MCF 10A (cell line): ENCODE measurements at regions of chr17 and their contacts with region 1.

Region 1: DNA sequence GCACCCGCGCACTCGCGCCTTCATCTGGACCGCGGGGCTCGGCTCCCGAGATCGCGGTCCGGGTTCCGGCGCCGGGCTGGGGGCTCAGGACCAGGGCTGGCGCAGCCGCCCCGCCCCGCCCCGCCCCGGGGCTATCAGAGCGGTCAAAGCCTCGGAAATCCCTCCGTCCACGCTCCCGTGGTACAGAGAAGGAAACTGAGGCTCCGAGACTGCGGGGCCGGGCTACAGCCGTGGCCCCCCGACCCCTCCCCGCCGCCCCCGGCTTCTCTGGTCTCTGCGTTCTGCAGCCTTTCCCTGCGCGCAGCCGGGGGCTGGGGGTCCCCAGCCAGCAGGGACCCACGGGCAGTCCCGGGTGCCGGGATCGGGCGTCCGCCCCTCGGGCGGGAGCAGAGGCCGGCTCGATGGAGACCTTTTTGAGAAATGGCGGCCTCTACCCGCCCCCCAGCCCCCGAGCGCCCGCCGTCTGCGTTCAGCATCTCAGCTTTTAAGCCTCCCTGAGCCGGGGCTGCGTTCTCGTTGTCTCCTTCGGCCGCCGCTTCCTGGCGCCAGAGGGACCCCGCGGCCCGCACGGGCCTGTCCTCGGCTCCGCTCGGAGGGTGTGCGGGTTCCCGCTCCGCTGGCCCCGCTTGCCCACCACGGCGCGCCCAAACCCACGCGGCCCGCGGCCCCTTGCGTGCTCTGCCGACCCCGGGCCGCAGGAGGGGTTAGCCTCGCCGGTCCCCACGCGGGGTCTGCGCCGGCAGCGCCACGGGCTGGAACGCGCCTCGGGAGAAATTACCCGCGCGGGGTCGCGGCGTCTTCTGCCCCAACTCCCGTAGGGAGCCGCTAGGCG is 1.5 kb upstream of the NPTX1 start:
- DNase-seq: no peak
- H3K4me3 Mint-ChIP-seq: no peak overlapping the region
- H3K27ac Mint-ChIP-seq: no peak overlapping the region
- H3K4me1 Mint-ChIP-seq: peaks cover 9% of the 10 kb centered on the region
- H3K27me3 Mint-ChIP-seq: peaks cover 59% of the 10 kb centered on the region
- CTCF ChIP-seq: no peak

Region 2: GRCh38 chr17:80575057-80575875 is 97.4 kb after region 1 on chr17:
- CTCF ChIA-PET with region 1: interaction called, 4 read pairs
- POLR2A ChIA-PET with region 1: no interaction called
- intact Hi-C with region 1: loop called (anchors 1 kb)
- DNase-seq: peak; percentile 90
- H3K4me3 Mint-ChIP-seq: no peak overlapping the region
- H3K27ac Mint-ChIP-seq: no peak overlapping the region
- H3K4me1 Mint-ChIP-seq: no peaks in the 10 kb centered on the region
- H3K27me3 Mint-ChIP-seq: no peaks in the 10 kb centered on the region
- CTCF ChIP-seq: peak; percentile 100